ENCODE measurements at regions of chr19 and their contacts with region 1.

Region 1: DNA sequence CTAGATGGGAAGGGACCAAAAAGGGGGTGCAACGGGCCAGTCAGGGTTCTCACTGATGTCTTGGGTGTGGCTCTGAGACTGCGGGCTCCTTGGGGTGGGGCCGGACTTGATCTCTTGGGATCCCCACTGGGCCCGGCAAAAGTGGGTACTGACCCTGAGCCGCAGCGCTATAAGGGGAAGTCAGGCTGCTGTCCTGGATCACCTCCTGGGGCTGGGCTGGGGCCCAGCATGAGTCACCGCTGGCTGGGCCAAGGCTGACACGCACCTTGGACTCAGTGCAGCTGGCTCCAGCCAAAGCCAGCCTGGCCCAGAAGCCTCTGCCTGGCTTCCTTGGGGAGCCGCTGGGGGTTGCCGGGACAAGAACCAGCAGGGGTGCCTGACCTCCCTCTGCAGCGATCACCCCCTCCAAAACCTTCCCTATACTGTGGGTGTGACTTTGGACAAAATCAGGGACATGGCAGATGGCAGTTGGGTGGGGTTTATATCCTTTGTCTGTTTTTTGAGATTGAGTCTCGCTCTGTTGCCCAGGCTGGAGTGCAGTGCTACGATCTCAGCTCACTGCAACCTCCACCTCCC is 617 bp upstream of the IQCN start:
- DNase-seq: peak; percentile 53 to 87 (median 65)
- ATAC-seq: peak; percentile 83
- H3K4me3 ChIP-seq: no peak overlapping the region
- H3K27ac ChIP-seq: peak overlapping the region; percentile 24; the same call in 2 of the 3 replicates
- H3K4me1 ChIP-seq: peaks cover 20 to 56% of the 10 kb centered on the region in 2 experiments
- H3K27me3 ChIP-seq: no peaks in the 10 kb centered on the region
- CTCF ChIP-seq: no peak
- EP300 ChIP-seq: peak; percentile 7; the same call in 1 of the 2 replicates
- POLR2A ChIP-seq: peak; percentile 77; the same call in 1 of the 2 replicates
- RAD21 ChIP-seq: 0 out of 4 replicates have a peak, but pooled peaks of 1 of the 2 experiments have one; percentile 2

Region 2: GRCh38 chr19:17938092-17938845 is 336.6 kb before region 1 on chr19:
- CTCF ChIA-PET with region 1: no interaction called
- POLR2A ChIA-PET with region 1: no interaction called
- in situ Hi-C with region 1: no loop called
- intact Hi-C with region 1: no loop called
- DNase-seq: peak; percentile 73 to 87 (median 80)
- ATAC-seq: peak; percentile 81
- H3K4me3 ChIP-seq: no peak overlapping the region
- H3K27ac ChIP-seq: no peak overlapping the region
- H3K4me1 ChIP-seq: peaks cover 19 to 32% of the 10 kb centered on the region in 2 experiments
- H3K27me3 ChIP-seq: no peaks in the 10 kb centered on the region
- CTCF ChIP-seq: peak; percentile 95
- EP300 ChIP-seq: no peak
- POLR2A ChIP-seq: no peak
- RAD21 ChIP-seq: peak; percentile 96 to 97

Region 3: DNA sequence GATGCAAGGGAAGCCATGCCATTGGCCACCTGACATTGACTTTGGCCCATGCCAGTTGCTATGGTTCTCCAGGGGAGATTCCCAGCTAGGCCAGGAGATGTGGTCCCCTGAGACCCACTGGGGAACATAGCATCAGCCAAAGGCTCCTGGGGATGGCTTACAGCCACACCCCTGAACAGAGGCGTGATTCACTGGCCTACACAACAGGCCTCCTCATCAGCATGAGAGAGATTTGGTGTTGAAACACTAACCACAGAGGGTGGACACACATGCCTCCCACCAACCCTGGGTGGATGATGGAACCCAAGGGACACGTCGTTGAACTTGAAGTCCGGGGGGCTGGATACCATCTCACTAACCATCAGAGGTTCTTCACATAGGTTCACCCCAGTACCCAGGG is 15.0 kb before region 1 on chr19:
- CTCF ChIA-PET with region 1: no interaction called
- POLR2A ChIA-PET with region 1: interaction called, 44 read pairs
- in situ Hi-C with region 1: no loop called
- intact Hi-C with region 1: no loop called
- DNase-seq: no peak
- ATAC-seq: no peak
- H3K4me3 ChIP-seq: no peak overlapping the region
- H3K27ac ChIP-seq: no peak overlapping the region
- H3K4me1 ChIP-seq: peaks cover 8 to 38% of the 10 kb centered on the region in 2 experiments
- H3K27me3 ChIP-seq: peaks cover 5 to 22% of the 10 kb centered on the region in 2 experiments; a peak in 3 of 5 replicates
- CTCF ChIP-seq: no peak
- EP300 ChIP-seq: no peak
- POLR2A ChIP-seq: no peak
- RAD21 ChIP-seq: no peak

Region 4: DNA sequence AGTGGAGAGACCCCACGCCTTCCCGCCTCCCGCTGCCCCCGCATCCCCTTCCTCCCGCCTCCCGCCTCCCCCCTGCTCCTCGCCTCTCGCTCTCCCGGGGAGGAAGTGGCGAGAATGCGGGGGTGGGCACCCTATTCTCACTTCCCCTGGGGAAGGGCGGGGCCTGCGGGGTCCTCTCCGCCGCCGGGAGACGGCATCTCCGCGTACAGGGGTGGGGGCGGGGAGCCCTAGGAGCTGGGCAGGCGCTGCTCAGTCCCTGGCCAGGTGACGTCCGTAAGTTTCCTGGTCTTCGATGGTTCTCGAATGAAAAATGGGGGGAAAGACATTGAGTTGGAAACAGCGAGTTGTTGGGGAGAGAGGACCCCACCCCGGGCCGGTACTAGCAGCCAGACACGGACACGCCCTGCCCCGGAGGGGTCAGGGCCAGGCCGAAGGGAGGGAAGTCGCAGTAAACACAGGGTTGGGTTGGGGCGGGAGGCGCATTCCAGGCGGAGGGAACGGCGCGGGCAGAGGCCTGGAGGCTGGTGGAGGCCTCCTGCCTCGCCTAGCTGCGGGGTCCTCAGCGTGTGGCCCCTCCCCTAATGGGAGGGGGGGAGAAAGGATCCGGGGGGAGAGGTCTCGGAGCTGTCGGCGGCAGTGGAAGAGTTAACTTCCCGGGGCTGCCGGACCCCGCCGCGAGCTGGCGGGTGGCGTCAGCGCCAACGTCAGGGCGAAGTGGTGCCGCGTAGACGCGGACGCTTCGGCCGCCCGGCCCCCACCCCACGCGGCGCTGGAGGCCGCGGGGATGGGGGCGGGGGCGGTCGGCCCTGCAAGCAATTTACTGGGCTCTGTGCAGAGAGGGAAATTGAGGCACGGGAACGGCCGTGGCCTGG is 17.0 kb after region 1 on chr19:
- CTCF ChIA-PET with region 1: no interaction called
- POLR2A ChIA-PET with region 1: interaction called, 113 read pairs
- in situ Hi-C with region 1: no loop called
- intact Hi-C with region 1: no loop called
- DNase-seq: peak; percentile 88 to 97 (median 92)
- ATAC-seq: peak; percentile 81
- H3K4me3 ChIP-seq: peak overlapping the region; percentile 64
- H3K27ac ChIP-seq: peak overlapping the region; percentile 98
- H3K4me1 ChIP-seq: peaks cover 31 to 64% of the 10 kb centered on the region in 2 experiments
- H3K27me3 ChIP-seq: no peaks in the 10 kb centered on the region
- CTCF ChIP-seq: no peak
- EP300 ChIP-seq: no peak
- POLR2A ChIP-seq: peak; percentile 79
- RAD21 ChIP-seq: peak in 1 of 2 experiments; percentile 4; a peak in 2 of 4 replicates

Region 5: GRCh38 chr19:18408053-18408476 is 133.2 kb after region 1 on chr19:
- CTCF ChIA-PET with region 1: no interaction called
- POLR2A ChIA-PET with region 1: interaction called, 34 read pairs
- in situ Hi-C with region 1: loop called (anchors 5 kb)
- intact Hi-C with region 1: no loop called
- DNase-seq: peak; percentile 63 to 81 (median 72)
- ATAC-seq: peak; percentile 86
- H3K4me3 ChIP-seq: no peak overlapping the region
- H3K27ac ChIP-seq: peak overlapping the region; percentile 39; the same call in 1 of the 3 replicates
- H3K4me1 ChIP-seq: peaks cover 3 to 25% of the 10 kb centered on the region in 2 experiments; a peak in 3 of 5 replicates
- H3K27me3 ChIP-seq: no peaks in the 10 kb centered on the region
- CTCF ChIP-seq: peak; percentile 82 to 89 (median 86)
- EP300 ChIP-seq: no peak
- POLR2A ChIP-seq: no peak
- RAD21 ChIP-seq: peak; percentile 55 to 89